A673 (cell line): ENCODE measurements at regions of chr7 and their contacts with region 1.

Region 1: GRCh38 chr7:148773334-148773733 is 74.6 kb downstream of the CUL1 start:
- DNase-seq: peak; percentile 98
- H3K4me3 ChIP-seq: peak overlapping the region; percentile 9
- H3K27ac ChIP-seq: peak overlapping the region; percentile 72
- H3K4me1 ChIP-seq: peaks cover 43% of the 10 kb centered on the region
- H3K27me3 ChIP-seq: no peaks in the 10 kb centered on the region
- CTCF ChIP-seq: no peak

Region 2: DNA sequence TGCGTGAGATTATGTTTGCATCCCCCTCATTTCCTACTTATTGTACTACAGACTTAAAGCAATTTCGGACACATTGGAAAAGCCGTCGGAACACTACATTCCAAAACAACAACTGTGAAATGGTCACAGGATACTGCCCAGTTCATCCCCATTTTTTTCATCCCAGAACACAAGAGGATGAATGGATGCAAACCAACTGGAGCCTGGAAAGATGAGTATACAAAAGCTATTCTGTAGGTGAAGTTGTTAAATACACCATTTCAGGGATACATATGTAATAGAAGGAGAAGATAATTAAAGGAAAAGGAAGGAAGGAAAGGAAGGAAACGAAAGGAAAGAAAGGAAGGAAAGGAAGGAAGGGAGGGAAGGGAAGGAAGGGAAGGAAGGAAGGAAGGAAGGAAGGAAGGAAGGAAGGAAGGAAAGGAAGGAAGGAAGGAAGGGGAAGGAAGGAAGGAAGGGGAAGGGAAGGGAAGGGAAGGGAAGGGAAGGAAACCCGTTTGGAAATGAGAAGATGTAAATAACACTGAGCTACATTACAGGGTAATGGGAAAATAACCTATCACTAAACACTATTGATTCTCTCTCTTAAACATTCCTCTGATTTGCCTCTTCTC is 231.3 kb before region 1 on chr7:
- CTCF ChIA-PET with region 1: no interaction called
- POLR2A ChIA-PET with region 1: interaction called, 15 read pairs
- intact Hi-C with region 1: no loop called
- DNase-seq: peak; percentile 53
- H3K4me3 ChIP-seq: no peak overlapping the region
- H3K27ac ChIP-seq: peak overlapping the region; percentile 26
- H3K4me1 ChIP-seq: peaks cover 4% of the 10 kb centered on the region
- H3K27me3 ChIP-seq: no peaks in the 10 kb centered on the region
- CTCF ChIP-seq: no peak

Region 3: DNA sequence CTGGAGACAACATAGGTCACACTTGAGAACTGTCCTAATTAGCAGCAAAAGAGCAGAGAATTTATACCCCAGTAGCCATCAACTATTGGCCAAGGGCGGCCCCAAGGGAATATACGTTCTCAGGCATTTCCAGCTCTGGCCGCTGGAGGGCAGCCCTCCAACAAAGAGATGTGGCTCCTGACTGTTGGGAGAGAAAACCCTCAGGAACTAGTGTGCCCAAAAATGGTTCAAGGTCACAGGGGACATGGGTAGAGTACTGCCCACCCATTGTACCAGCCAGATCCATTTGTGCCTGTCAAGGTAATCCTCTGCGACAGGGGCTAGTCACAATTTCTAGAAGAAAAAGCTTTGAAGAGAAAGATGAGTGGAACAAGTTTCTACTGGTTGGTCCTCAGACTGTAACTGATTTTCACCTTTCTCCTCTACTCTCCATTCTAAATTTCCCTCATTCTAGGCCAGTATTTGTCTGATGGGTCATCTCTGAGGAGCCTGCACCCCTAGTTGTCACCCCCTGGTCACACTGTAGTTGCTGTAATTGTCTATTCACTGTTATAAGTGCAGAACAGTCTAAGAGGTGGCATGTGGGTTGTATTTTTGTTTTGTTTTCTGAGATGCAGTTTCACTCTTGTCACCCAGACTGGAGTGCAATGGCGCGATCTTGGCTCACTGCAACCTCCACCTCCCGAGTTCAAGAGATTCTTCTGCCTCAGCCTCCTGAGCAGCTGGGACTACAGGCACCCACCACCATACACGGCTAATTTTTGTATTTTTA is 197.5 kb before region 1 on chr7:
- CTCF ChIA-PET with region 1: no interaction called
- POLR2A ChIA-PET with region 1: no interaction called
- intact Hi-C with region 1: loop called (anchors 10 kb)
- DNase-seq: peak; percentile 83
- H3K4me3 ChIP-seq: no peak overlapping the region
- H3K27ac ChIP-seq: no peak overlapping the region
- H3K4me1 ChIP-seq: no peaks in the 10 kb centered on the region
- H3K27me3 ChIP-seq: no peaks in the 10 kb centered on the region
- CTCF ChIP-seq: peak; percentile 94

Region 4: GRCh38 chr7:148698397-148699023 is 74.8 kb before region 1 on chr7 and contains the start of gene CUL1:
- CTCF ChIA-PET with region 1: no interaction called
- POLR2A ChIA-PET with region 1: no interaction called
- intact Hi-C with region 1: loop called (anchors 5 kb)
- DNase-seq: peak; percentile 78
- H3K4me3 ChIP-seq: peak within 1 kb of the TSS; percentile 89
- H3K27ac ChIP-seq: peak within 1 kb of the TSS; percentile 97
- H3K4me1 ChIP-seq: peaks cover 40% of the 10 kb centered on the region
- H3K27me3 ChIP-seq: no peaks in the 10 kb centered on the region
- CTCF ChIP-seq: no peak
- total RNA-seq, gene CUL1: 75.5 and 75.7 TPM in 2 replicates

Region 5: GRCh38 chr7:148747275-148747674 is 26.1 kb before region 1 on chr7:
- CTCF ChIA-PET with region 1: interaction called, 5 read pairs
- POLR2A ChIA-PET with region 1: no interaction called
- intact Hi-C with region 1: loop called (anchors 2 kb)
- DNase-seq: no peak
- H3K4me3 ChIP-seq: no peak overlapping the region
- H3K27ac ChIP-seq: no peak overlapping the region
- H3K4me1 ChIP-seq: no peaks in the 10 kb centered on the region
- H3K27me3 ChIP-seq: no peaks in the 10 kb centered on the region
- CTCF ChIP-seq: no peak